ENCODE measurements at regions of chr2 and their contacts with region 1.

Region 1: GRCh38 chr2:62705007-62705829 is at the start of gene EHBP1:
- DNase-seq: peak; percentile 100
- H3K4me3 Mint-ChIP-seq: peak within 1 kb of the TSS; percentile 87
- H3K27ac Mint-ChIP-seq: peak within 1 kb of the TSS; percentile 78
- H3K4me1 Mint-ChIP-seq: peaks cover 30% of the 10 kb centered on the region
- H3K27me3 Mint-ChIP-seq: no peaks in the 10 kb centered on the region
- CTCF ChIP-seq: no peak
- total RNA-seq, gene EHBP1: 62.1 and 81.2 TPM in 2 replicates

Region 2: GRCh38 chr2:62505750-62506420 is 199.3 kb before region 1 on chr2 and contains the start of gene TMEM17:
- CTCF ChIA-PET with region 1: no interaction called
- POLR2A ChIA-PET with region 1: interaction called, 14 read pairs
- intact Hi-C with region 1: loop called (anchors 1 kb)
- DNase-seq: peak; percentile 88
- H3K4me3 Mint-ChIP-seq: peak within 1 kb of the TSS; percentile 79
- H3K27ac Mint-ChIP-seq: peak within 1 kb of the TSS; percentile 88
- H3K4me1 Mint-ChIP-seq: peaks cover 23% of the 10 kb centered on the region
- H3K27me3 Mint-ChIP-seq: no peaks in the 10 kb centered on the region
- CTCF ChIP-seq: no peak
- total RNA-seq, gene TMEM17: 2.6 and 3.1 TPM in 2 replicates

Region 3: GRCh38 chr2:62577994-62578781 is 127.0 kb before region 1 on chr2:
- CTCF ChIA-PET with region 1: no interaction called
- POLR2A ChIA-PET with region 1: interaction called, 5 read pairs
- intact Hi-C with region 1: loop called (anchors 1 kb)
- DNase-seq: peak; percentile 94
- H3K4me3 Mint-ChIP-seq: peak overlapping the region; percentile 10
- H3K27ac Mint-ChIP-seq: peak overlapping the region; percentile 90
- H3K4me1 Mint-ChIP-seq: peaks cover 19% of the 10 kb centered on the region
- H3K27me3 Mint-ChIP-seq: no peaks in the 10 kb centered on the region
- CTCF ChIP-seq: no peak

Region 4: GRCh38 chr2:62654423-62654791 is 50.8 kb before region 1 on chr2:
- CTCF ChIA-PET with region 1: no interaction called
- POLR2A ChIA-PET with region 1: interaction called, 26 read pairs
- intact Hi-C with region 1: no loop called
- DNase-seq: peak; percentile 50
- H3K4me3 Mint-ChIP-seq: peak overlapping the region; percentile 22
- H3K27ac Mint-ChIP-seq: peak overlapping the region; percentile 79
- H3K4me1 Mint-ChIP-seq: peaks cover 23% of the 10 kb centered on the region
- H3K27me3 Mint-ChIP-seq: no peaks in the 10 kb centered on the region
- CTCF ChIP-seq: no peak

Region 5: GRCh38 chr2:62660582-62661262 is 44.5 kb before region 1 on chr2:
- CTCF ChIA-PET with region 1: interaction called, 5 read pairs
- POLR2A ChIA-PET with region 1: interaction called, 29 read pairs
- intact Hi-C with region 1: loop called (anchors 2 kb)
- DNase-seq: peak; percentile 87
- H3K4me3 Mint-ChIP-seq: peak overlapping the region; percentile 46
- H3K27ac Mint-ChIP-seq: peak overlapping the region; percentile 91
- H3K4me1 Mint-ChIP-seq: peaks cover 60% of the 10 kb centered on the region
- H3K27me3 Mint-ChIP-seq: no peaks in the 10 kb centered on the region
- CTCF ChIP-seq: no peak

Region 6: DNA sequence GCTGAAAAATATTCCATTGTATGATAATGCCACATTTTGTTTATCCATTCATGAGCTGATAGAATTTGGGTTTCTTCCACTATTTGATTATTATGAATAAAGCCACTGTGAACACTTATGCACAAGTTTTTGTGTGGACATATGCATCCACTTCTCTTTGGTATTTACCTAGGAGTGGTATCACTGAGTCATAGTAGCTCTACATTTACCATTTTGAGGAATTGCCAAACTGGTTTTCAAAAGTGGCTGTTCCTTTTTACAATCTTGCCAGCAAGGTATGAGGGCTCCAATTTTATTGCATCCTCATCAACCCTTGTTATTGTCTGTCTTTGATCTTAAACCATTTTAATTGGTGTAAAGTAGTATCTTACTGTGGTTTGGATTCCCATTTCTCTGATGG is 13.0 kb before region 1 on chr2:
- CTCF ChIA-PET with region 1: no interaction called
- POLR2A ChIA-PET with region 1: interaction called, 14 read pairs
- intact Hi-C with region 1: no loop called
- DNase-seq: no peak
- H3K4me3 Mint-ChIP-seq: no peak overlapping the region
- H3K27ac Mint-ChIP-seq: no peak overlapping the region
- H3K4me1 Mint-ChIP-seq: peaks cover 5% of the 10 kb centered on the region
- H3K27me3 Mint-ChIP-seq: no peaks in the 10 kb centered on the region
- CTCF ChIP-seq: no peak

Region 7: DNA sequence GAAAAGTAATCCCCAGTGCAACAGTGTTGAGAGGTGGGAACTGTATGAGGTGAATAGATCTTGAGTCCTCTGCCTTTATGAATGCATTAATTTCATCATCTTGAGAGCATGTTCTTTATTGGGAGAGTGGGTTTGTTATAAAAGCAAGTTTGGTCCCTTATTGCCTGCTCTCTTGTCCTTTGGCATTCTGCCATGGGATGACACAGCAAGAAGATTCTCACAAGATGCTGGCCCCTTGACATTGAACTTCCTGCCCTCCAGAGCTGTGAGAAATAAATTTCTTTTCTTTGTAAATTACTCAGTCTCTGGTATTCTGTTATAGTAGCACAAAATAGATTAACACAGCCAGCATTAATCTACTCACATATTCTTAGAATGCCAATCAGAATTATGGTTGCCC is 108.9 kb after region 1 on chr2:
- CTCF ChIA-PET with region 1: no interaction called
- POLR2A ChIA-PET with region 1: no interaction called
- intact Hi-C with region 1: no loop called
- DNase-seq: peak; percentile 61
- H3K4me3 Mint-ChIP-seq: no peak overlapping the region
- H3K27ac Mint-ChIP-seq: no peak overlapping the region
- H3K4me1 Mint-ChIP-seq: peaks cover 15% of the 10 kb centered on the region
- H3K27me3 Mint-ChIP-seq: no peaks in the 10 kb centered on the region
- CTCF ChIP-seq: no peak

Region 8: GRCh38 chr2:63189026-63189425 is 483.8 kb after region 1 on chr2:
- CTCF ChIA-PET with region 1: interaction called, 3 read pairs
- POLR2A ChIA-PET with region 1: no interaction called
- intact Hi-C with region 1: loop called (anchors 10 kb)
- DNase-seq: peak; percentile 77
- H3K4me3 Mint-ChIP-seq: peak overlapping the region; percentile 31
- H3K27ac Mint-ChIP-seq: no peak overlapping the region
- H3K4me1 Mint-ChIP-seq: peaks cover 6% of the 10 kb centered on the region
- H3K27me3 Mint-ChIP-seq: no peaks in the 10 kb centered on the region
- CTCF ChIP-seq: peak; percentile 90

Measured in MCF 10A (cell line).